Activated CD4-positive, alpha-beta memory T cell treated with anti-CD3 and anti-CD28 coated beads for 36 hours (primary cell): ENCODE measurements at regions of chr20 and their contacts with region 1.

Region 1: DNA sequence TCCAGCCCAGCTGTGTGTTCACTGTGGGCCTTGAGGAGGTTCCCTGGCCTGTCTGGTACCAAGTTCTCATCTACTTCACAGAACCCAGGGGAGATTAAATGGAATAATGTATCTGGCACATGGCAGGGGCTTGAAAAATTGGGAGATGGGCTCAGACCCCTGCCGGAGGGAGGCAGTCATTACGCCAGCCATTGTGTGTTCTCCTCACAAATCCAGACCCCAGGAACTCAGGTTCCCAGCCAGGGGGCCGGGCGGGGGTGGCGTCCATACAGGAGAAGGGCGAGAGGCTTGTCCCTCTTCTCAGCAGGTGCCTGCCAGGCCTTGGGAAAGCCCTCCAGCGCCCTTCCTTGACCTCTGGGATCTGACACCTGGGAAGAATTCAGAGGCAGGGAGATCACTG is 8.1 kb downstream of the NOL4L start:
- DNase-seq: no peak
- H3K4me3 Mint-ChIP-seq: no peak overlapping the region
- H3K27ac Mint-ChIP-seq: no peak overlapping the region
- H3K4me1 Mint-ChIP-seq: peaks cover 48% of the 10 kb centered on the region
- H3K27me3 Mint-ChIP-seq: no peaks in the 10 kb centered on the region

Region 2: DNA sequence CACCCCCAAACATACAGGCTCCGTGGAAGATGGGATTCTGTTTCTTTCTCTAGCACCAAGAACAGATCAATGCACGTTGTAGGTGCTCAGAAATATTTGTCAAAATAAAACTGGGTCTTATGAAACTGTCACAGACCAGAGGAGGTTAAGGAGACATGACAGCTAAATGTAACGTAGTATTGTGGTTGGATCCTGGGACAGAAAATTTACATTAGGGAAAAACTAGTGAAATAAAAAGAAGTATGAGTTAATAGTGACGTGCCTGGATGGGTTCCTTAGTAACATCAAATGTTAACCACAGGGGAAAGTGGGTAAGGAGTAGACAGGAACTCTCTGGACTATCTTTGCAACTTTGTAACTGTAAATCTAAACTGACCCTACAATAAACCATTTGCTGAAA is 23.4 kb before region 1 on chr20:
- CTCF ChIA-PET with region 1: interaction called, 4 read pairs
- POLR2A ChIA-PET with region 1: no interaction called
- intact Hi-C with region 1: loop called (anchors 2 kb)
- DNase-seq: no peak
- H3K4me3 Mint-ChIP-seq: no peak overlapping the region
- H3K27ac Mint-ChIP-seq: peak overlapping the region; percentile 64
- H3K4me1 Mint-ChIP-seq: peaks cover 60% of the 10 kb centered on the region
- H3K27me3 Mint-ChIP-seq: no peaks in the 10 kb centered on the region

Region 3: DNA sequence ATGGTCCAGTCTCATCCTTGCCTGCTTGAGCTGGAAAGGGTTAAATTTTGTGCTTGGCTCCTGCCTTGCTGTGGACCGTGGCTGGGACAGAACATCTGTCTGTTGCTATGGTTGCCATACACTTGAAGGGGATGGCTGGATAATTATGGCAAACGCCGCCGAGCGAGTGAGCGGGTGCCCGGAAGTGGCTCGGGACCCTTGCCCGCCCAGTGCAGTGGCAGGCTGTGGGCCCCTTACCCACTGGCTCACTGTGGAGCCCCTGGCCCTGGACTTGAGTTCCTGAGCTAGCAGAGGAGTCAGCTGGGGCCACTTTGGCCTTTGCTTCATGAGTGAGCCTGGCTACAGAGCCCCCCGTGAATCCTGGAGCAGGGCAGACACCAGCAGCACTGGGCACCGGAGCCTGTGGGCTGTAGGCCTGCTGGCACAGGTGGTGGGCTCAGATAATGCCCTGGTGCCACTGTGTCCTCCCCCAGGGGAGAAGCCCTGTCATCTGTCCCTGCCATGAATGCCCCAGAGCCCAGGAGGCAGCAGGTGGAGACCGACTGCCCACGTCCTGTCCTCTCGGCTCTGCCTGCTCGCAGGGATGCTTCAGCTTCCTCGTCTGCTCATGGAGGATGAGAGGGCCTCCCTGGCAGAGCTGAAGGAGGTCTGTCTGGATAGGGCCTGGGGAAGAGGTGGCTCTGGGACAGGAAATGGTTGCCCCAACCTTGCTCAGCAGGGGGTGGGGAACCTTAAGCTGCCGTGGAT is 33.6 kb after region 1 on chr20:
- CTCF ChIA-PET with region 1: no interaction called
- POLR2A ChIA-PET with region 1: no interaction called
- intact Hi-C with region 1: no loop called
- DNase-seq: no peak
- H3K4me3 Mint-ChIP-seq: no peak overlapping the region
- H3K27ac Mint-ChIP-seq: no peak overlapping the region
- H3K4me1 Mint-ChIP-seq: no peaks in the 10 kb centered on the region
- H3K27me3 Mint-ChIP-seq: no peaks in the 10 kb centered on the region